Activated B cell treated with CpG ODN at 0.5 μM for 24 hours (primary cell): ENCODE measurements at regions of chr3 and their contacts with region 1.

Region 1: GRCh38 chr3:169863458-169863899 is 6.3 kb downstream of the LRRC31 start:
- DNase-seq: peak; percentile 49
- ATAC-seq: peak; percentile 50
- H3K4me3 Mint-ChIP-seq: peak overlapping the region; percentile 19
- H3K27ac Mint-ChIP-seq: peak overlapping the region; percentile 35
- H3K4me1 Mint-ChIP-seq: peaks cover 30% of the 10 kb centered on the region
- H3K27me3 Mint-ChIP-seq: no peaks in the 10 kb centered on the region
- CTCF ChIP-seq: peak; percentile 94

Region 2: DNA sequence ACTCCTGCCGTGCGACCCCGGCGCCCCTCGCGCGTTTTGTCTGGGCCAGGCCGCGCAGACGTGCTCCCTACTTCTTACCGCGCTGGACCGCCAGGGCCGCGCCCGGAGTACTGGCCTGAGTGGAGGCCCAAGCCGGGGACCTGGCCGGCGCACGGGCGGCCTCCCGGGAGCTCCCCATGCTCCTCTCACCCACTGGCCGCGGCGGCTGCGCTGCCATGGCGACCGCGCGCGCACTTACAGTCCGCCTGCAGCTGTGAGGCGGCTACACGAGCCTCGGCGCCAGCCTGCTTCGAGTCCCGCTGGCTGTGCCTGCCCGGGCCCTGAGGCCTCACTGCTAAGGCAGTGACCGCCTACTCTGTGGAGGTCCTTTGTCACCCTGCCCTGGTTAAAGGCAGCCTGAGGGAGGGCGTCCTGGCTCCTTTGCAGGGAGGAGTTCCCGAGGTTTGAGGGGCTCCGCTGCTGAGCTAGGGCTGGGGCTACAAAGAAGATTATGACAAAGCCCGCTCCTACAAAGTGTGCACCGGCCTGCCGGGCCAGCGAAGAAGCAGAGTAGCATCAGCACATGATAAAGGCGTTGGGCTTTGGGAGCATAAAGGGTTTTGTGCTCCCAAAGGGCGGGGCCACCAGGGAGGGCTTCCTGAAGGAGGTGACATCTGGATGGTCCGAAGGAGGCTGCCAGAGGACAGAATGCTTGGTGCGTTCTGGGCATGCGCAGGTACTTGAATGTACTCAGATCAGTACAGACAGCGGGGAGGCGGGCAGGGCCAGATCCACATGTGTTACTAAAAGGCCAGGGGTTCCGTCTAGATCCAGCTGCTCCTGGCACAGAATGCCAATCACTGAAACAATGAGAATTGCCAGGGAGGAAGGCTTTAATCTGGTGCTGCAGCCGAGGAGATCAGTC is 50.9 kb before region 1 on chr3 and contains the starts of genes LRRC34 and LRRIQ4:
- CTCF ChIA-PET with region 1: interaction called, 7 read pairs
- POLR2A ChIA-PET with region 1: interaction called, 14 read pairs
- intact Hi-C with region 1: loop called (anchors 1 kb)
- DNase-seq: peak; percentile 70
- ATAC-seq: peak; percentile 56
- H3K4me3 Mint-ChIP-seq: peak within 1 kb of the TSS; percentile 85
- H3K27ac Mint-ChIP-seq: peak within 1 kb of the TSS; percentile 97
- H3K4me1 Mint-ChIP-seq: peaks cover 37% of the 10 kb centered on the region
- H3K27me3 Mint-ChIP-seq: no peaks in the 10 kb centered on the region
- CTCF ChIP-seq: no peak
- total RNA-seq, gene LRRC34: 4.2 and 5.7 TPM in 2 replicates
- total RNA-seq, gene LRRIQ4: 0.29 and 0.40 TPM in 2 replicates

Region 3: GRCh38 chr3:169931747-169932520 is 68.5 kb after region 1 on chr3:
- CTCF ChIA-PET with region 1: interaction called, 4 read pairs
- POLR2A ChIA-PET with region 1: interaction called, 31 read pairs
- intact Hi-C with region 1: loop called (anchors 1 kb)
- DNase-seq: peak; percentile 55
- ATAC-seq: peak; percentile 88
- H3K4me3 Mint-ChIP-seq: peak overlapping the region; percentile 70
- H3K27ac Mint-ChIP-seq: peak overlapping the region; percentile 95
- H3K4me1 Mint-ChIP-seq: peaks cover 52% of the 10 kb centered on the region
- H3K27me3 Mint-ChIP-seq: no peaks in the 10 kb centered on the region
- CTCF ChIP-seq: no peak

Region 4: GRCh38 chr3:169980055-169980454 is 116.6 kb after region 1 on chr3:
- CTCF ChIA-PET with region 1: interaction called, 6 read pairs
- POLR2A ChIA-PET with region 1: interaction called, 3 read pairs
- intact Hi-C with region 1: loop called (anchors 1 kb)
- DNase-seq: no peak
- ATAC-seq: no peak
- H3K4me3 Mint-ChIP-seq: no peak overlapping the region
- H3K27ac Mint-ChIP-seq: peak overlapping the region; percentile 10
- H3K4me1 Mint-ChIP-seq: peaks cover 51% of the 10 kb centered on the region
- H3K27me3 Mint-ChIP-seq: no peaks in the 10 kb centered on the region
- CTCF ChIP-seq: no peak

Region 5: DNA sequence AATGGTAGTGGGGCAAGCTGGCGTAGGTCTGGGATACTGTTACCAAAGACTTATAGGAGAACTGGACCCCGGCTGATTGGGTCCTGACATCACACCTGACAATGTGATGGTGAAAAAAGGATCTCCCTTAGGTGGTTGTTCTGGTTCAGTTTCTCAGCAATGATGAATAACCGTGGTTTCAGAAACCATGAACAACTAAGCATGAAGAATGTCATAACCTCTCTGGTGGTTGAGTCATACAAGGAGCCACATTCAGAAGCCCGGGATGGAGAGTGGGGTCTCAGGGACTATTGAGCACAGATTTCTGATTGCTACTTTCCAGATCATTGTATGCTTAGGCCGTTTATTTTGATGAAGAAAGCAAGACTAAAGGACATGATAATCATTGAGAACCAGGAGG is 191.7 kb after region 1 on chr3:
- CTCF ChIA-PET with region 1: interaction called, 15 read pairs
- POLR2A ChIA-PET with region 1: interaction called, 9 read pairs
- intact Hi-C with region 1: loop called (anchors 1 kb)
- DNase-seq: no peak
- ATAC-seq: peak; percentile 75
- H3K4me3 Mint-ChIP-seq: peak overlapping the region; percentile 77
- H3K27ac Mint-ChIP-seq: peak overlapping the region; percentile 87
- H3K4me1 Mint-ChIP-seq: peaks cover 57% of the 10 kb centered on the region
- H3K27me3 Mint-ChIP-seq: no peaks in the 10 kb centered on the region
- CTCF ChIP-seq: no peak

Region 6: GRCh38 chr3:170414202-170414663 is 550.8 kb after region 1 on chr3:
- CTCF ChIA-PET with region 1: no interaction called
- POLR2A ChIA-PET with region 1: no interaction called
- intact Hi-C with region 1: loop called (anchors 1 kb)
- DNase-seq: no peak
- ATAC-seq: peak; percentile 72
- H3K4me3 Mint-ChIP-seq: no peak overlapping the region
- H3K27ac Mint-ChIP-seq: no peak overlapping the region
- H3K4me1 Mint-ChIP-seq: peaks cover 9% of the 10 kb centered on the region
- H3K27me3 Mint-ChIP-seq: peaks cover 15% of the 10 kb centered on the region
- CTCF ChIP-seq: peak; percentile 98